Right cardiac atrium (tissue), 5 donors: ENCODE measurements at regions of chr16 and their contacts with region 1.

Region 1: DNA sequence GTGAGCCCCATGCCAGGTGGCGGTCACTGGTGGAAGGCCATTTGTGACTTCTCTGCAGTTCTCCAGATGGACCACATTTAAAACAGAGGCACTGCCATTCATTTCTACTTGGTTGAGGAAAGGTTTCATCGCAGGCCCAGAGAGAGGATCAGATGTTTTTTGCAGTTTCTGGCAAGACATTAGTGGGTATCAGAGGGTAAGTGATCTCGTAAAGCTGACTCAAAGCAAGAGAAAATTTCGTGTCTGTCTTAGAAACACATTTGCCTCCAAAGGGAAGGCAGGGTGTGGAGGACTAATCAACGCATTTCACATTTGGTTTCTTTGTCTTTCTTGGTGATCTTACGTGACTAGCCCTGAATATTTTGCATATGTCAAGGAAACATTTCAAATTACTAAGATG is 81.8 kb downstream of the PRKCB start:
- DNase-seq: no peak
- ATAC-seq: no peak
- H3K4me3 ChIP-seq: no peak overlapping the region
- H3K27ac ChIP-seq: no peak overlapping the region
- H3K4me1 ChIP-seq: no peaks in the 10 kb centered on the region
- H3K27me3 ChIP-seq: no peaks in the 10 kb centered on the region

Region 2: DNA sequence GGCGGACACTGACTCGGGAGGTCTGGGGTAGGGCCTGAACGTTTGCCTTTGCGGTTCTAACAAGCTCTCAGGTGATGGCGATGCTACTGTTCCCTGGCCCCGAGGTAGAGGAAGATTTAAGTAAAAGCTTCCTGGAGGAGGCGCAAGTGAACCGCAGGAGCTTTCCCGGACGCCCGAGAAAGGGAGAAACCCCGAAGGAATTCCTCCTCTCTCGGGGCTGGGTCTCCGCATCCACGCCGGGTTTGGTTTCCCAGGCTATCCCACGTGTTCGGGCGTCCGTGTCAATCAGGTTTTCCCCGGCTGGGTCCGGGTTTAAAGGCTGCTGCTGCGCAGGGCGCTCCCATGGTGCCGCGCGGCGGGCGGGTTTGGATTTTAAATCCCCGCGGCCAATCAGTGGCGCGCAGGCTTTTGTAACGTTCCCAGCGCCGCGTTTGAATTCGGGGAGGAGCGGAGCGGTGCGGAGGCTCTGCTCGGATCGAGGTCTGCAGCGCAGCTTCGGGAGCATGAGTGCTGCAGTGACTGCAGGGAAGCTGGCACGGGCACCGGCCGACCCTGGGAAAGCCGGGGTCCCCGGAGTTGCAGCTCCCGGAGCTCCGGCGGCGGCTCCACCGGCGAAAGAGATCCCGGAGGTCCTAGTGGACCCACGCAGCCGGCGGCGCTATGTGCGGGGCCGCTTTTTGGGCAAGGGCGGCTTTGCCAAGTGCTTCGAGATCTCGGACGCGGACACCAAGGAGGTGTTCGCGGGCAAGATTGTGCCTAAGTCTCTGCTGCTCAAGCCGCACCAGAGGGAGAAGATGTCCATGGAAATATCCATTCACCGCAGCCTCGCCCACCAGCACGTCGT is 239.0 kb before region 1 on chr16 and contains the start of gene PLK1:
- intact Hi-C with region 1: no loop called
- DNase-seq: peak; percentile 73 to 91 (median 88)
- ATAC-seq: peak; percentile 94 to 95
- H3K4me3 ChIP-seq: peak within 1 kb of the TSS; percentile 73
- H3K27ac ChIP-seq: no peak within 1 kb of the TSS
- H3K4me1 ChIP-seq: peaks cover 2% of the 10 kb centered on the region
- H3K27me3 ChIP-seq: no peaks in the 10 kb centered on the region
- total RNA-seq, gene PLK1: 0.91 to 2.2 (median 2.1) TPM

Region 3: DNA sequence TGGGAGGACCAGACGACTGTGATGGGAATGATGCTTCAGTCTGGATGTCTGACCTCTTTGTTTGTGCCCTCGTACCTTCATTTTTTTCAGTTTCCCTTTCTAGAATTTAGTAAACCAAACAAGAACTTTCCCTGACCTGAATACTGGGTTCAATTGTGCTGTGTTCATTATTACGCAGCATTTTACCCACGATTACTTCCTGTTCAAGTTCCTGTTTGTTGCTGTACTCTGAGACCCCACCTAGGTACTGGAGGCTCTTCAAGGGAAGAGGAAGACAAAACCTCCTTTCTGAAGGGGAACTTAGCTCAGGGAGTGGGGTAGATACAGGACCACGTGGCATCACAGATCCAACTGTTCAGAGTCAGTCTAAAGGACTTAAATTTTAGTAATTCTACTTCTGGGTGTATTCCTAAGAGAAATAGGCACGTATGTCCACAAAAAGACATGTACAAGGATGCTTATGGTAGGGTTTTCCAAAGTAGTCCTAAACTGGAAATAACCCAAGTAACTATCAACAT is 91.0 kb before region 1 on chr16:
- intact Hi-C with region 1: no loop called
- DNase-seq: no peak
- ATAC-seq: peak; percentile 41 to 54
- H3K4me3 ChIP-seq: no peak overlapping the region
- H3K27ac ChIP-seq: no peak overlapping the region
- H3K4me1 ChIP-seq: no peaks in the 10 kb centered on the region
- H3K27me3 ChIP-seq: peaks cover 3% of the 10 kb centered on the region

Region 4: GRCh38 chr16:23858542-23858941 is 59.1 kb before region 1 on chr16:
- intact Hi-C with region 1: loop called in 1 of 4 experiments (anchors 10 kb)
- DNase-seq: no peak
- ATAC-seq: peak; percentile 49 to 83
- H3K4me3 ChIP-seq: no peak overlapping the region
- H3K27ac ChIP-seq: no peak overlapping the region
- H3K4me1 ChIP-seq: no peaks in the 10 kb centered on the region
- H3K27me3 ChIP-seq: no peaks in the 10 kb centered on the region

Region 5: DNA sequence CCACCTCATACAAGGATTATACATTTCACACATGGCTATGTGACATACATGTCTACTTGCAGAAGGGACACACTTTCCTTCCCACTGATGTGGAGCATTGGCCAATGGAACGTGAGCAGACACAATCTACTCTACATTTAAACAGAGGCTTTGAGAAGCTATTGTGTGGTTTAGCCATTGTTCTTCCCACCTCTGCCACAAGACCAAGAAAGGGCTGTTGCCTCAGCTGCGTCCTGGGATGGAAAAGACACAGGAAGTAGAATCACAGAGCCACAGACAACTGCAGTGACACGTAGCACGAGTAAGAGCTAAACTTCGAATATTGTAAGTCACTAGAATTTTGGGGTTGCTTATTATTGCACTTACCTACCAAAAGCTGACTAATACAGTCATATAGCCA is 48.6 kb before region 1 on chr16:
- intact Hi-C with region 1: no loop called
- DNase-seq: no peak
- ATAC-seq: no peak
- H3K4me3 ChIP-seq: no peak overlapping the region
- H3K27ac ChIP-seq: no peak overlapping the region
- H3K4me1 ChIP-seq: peaks cover 1% of the 10 kb centered on the region
- H3K27me3 ChIP-seq: no peaks in the 10 kb centered on the region

Region 6: GRCh38 chr16:24116989-24117388 is 199.4 kb after region 1 on chr16:
- intact Hi-C with region 1: no loop called
- DNase-seq: no peak
- ATAC-seq: peak; percentile 49 to 50
- H3K4me3 ChIP-seq: no peak overlapping the region
- H3K27ac ChIP-seq: peak overlapping the region; percentile 73
- H3K4me1 ChIP-seq: peaks cover 4% of the 10 kb centered on the region
- H3K27me3 ChIP-seq: no peaks in the 10 kb centered on the region